ENCODE measurements at regions of chr3 and their contacts with region 1.

Region 1: GRCh38 chr3:32460031-32460749 is 42.5 kb downstream of the CMTM6 start:
- DNase-seq: peak; percentile 86
- H3K4me3 Mint-ChIP-seq: peak overlapping the region; percentile 67
- H3K27ac Mint-ChIP-seq: no peak overlapping the region
- H3K4me1 Mint-ChIP-seq: peaks cover 36% of the 10 kb centered on the region
- H3K27me3 Mint-ChIP-seq: no peaks in the 10 kb centered on the region

Region 2: GRCh38 chr3:32401556-32402081 is 58.6 kb before region 1 on chr3:
- CTCF ChIA-PET with region 1: interaction called, 5 read pairs
- intact Hi-C with region 1: loop called (anchors 1 kb)
- DNase-seq: peak; percentile 77
- H3K4me3 Mint-ChIP-seq: peak overlapping the region; percentile 92
- H3K27ac Mint-ChIP-seq: peak overlapping the region; percentile 99
- H3K4me1 Mint-ChIP-seq: peaks cover 74% of the 10 kb centered on the region
- H3K27me3 Mint-ChIP-seq: no peaks in the 10 kb centered on the region

Region 3: GRCh38 chr3:32420126-32421038 is 39.8 kb before region 1 on chr3:
- CTCF ChIA-PET with region 1: interaction called, 3 read pairs
- intact Hi-C with region 1: loop called (anchors 1 kb)
- DNase-seq: peak; percentile 81
- H3K4me3 Mint-ChIP-seq: peak overlapping the region; percentile 66
- H3K27ac Mint-ChIP-seq: peak overlapping the region; percentile 94
- H3K4me1 Mint-ChIP-seq: peaks cover 92% of the 10 kb centered on the region
- H3K27me3 Mint-ChIP-seq: no peaks in the 10 kb centered on the region

Region 4: GRCh38 chr3:32438596-32439344 is 21.4 kb before region 1 on chr3:
- CTCF ChIA-PET with region 1: interaction called, 5 read pairs
- intact Hi-C with region 1: loop called (anchors 1 kb)
- DNase-seq: peak; percentile 67
- H3K4me3 Mint-ChIP-seq: peak overlapping the region; percentile 19
- H3K27ac Mint-ChIP-seq: peak overlapping the region; percentile 84
- H3K4me1 Mint-ChIP-seq: peaks cover 79% of the 10 kb centered on the region
- H3K27me3 Mint-ChIP-seq: no peaks in the 10 kb centered on the region

Region 5: GRCh38 chr3:32484436-32484835 is 24.2 kb after region 1 on chr3:
- CTCF ChIA-PET with region 1: no interaction called
- intact Hi-C with region 1: no loop called
- DNase-seq: no peak
- H3K4me3 Mint-ChIP-seq: no peak overlapping the region
- H3K27ac Mint-ChIP-seq: no peak overlapping the region
- H3K4me1 Mint-ChIP-seq: peaks cover 17% of the 10 kb centered on the region
- H3K27me3 Mint-ChIP-seq: no peaks in the 10 kb centered on the region

Region 6: GRCh38 chr3:32577581-32578556 is 117.7 kb after region 1 on chr3:
- CTCF ChIA-PET with region 1: no interaction called
- intact Hi-C with region 1: no loop called
- DNase-seq: peak; percentile 13
- H3K4me3 Mint-ChIP-seq: peak overlapping the region; percentile 2
- H3K27ac Mint-ChIP-seq: no peak overlapping the region
- H3K4me1 Mint-ChIP-seq: peaks cover 11% of the 10 kb centered on the region
- H3K27me3 Mint-ChIP-seq: no peaks in the 10 kb centered on the region

Measured in activated naive CD4-positive, alpha-beta T cell treated with anti-CD3 and anti-CD28 coated beads for 36 hours (primary cell).